ENCODE measurements at regions of chr3 and their contacts with region 1.

Region 1: GRCh38 chr3:152298393-152299242 is 29.9 kb downstream of the MBNL1 start:
- DNase-seq: peak; percentile 100

Region 2: GRCh38 chr3:152444029-152444641 is 145.5 kb after region 1 on chr3:
- in situ Hi-C with region 1: loop called (anchors 25 kb)
- DNase-seq: peak; percentile 74